ENCODE measurements at regions of chr3 and their contacts with region 1.

Region 1: GRCh38 chr3:98593046-98593936 is at the start of gene CPOX:
- DNase-seq: peak; percentile 57 to 67 (median 65)
- H3K4me3 ChIP-seq: peak within 1 kb of the TSS; percentile 54 to 83 (median 75)
- H3K4me3 Mint-ChIP-seq: peak within 1 kb of the TSS; percentile 90 to 99
- H3K27ac ChIP-seq: peak within 1 kb of the TSS; percentile 5 to 80
- H3K27ac Mint-ChIP-seq: peak within 1 kb of the TSS; percentile 76 to 96 (median 90)
- H3K4me1 ChIP-seq: peaks cover 46 to 64% of the 10 kb centered on the region in 2 donors
- H3K4me1 Mint-ChIP-seq: peaks cover 63% of the 10 kb centered on the region
- H3K27me3 ChIP-seq: no peaks in the 10 kb centered on the region
- H3K27me3 Mint-ChIP-seq: peaks cover 0 to 5% (median 2%) of the 10 kb centered on the region in 3 donors
- CTCF ChIP-seq: no peak
- polyA plus RNA-seq, gene CPOX: 4.2 to 12.8 (median 5.2) TPM

Region 2: GRCh38 chr3:98525494-98525893 is 67.8 kb before region 1 on chr3:
- intact Hi-C with region 1: loop called in 1 of 2 experiments (anchors 5 kb)
- DNase-seq: no peak
- H3K4me3 ChIP-seq: no peak overlapping the region
- H3K4me3 Mint-ChIP-seq: no peak overlapping the region
- H3K27ac ChIP-seq: no peak overlapping the region
- H3K27ac Mint-ChIP-seq: no peak overlapping the region
- H3K4me1 ChIP-seq: peaks cover 11 to 19% of the 10 kb centered on the region in 2 donors
- H3K4me1 Mint-ChIP-seq: peaks cover 19% of the 10 kb centered on the region
- H3K27me3 ChIP-seq: no peaks in the 10 kb centered on the region
- H3K27me3 Mint-ChIP-seq: peaks cover 0 to 5% (median 1%) of the 10 kb centered on the region in 3 donors
- CTCF ChIP-seq: no peak

Region 3: DNA sequence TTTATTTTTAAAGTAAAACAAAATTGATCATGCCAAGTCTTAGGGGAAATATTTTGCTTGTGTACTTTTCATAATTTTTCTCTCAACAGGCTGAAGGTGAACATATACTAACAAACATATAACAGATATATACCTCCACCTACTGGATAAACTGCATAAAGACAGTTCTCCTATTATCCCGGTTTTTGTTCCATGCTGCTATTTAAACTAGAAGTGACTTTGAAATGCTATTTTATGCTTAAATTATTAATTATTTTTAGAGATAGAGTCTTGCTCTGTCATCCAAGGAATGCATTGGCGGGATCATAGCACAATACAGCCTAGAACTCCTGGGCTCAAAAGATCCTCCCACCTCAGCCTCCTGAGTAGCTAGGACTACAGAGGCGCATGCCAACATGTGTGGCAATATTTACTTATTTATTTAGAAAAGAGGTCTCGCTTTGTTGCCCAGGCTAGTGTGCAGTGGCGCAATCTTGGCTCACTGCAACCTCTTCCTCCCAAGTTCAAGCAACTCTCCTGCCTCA is 219.6 kb after region 1 on chr3:
- intact Hi-C with region 1: loop called in 1 of 2 experiments (anchors 5 kb)
- DNase-seq: peak; percentile 9 to 65 (median 40)
- H3K4me3 ChIP-seq: no peak overlapping the region
- H3K4me3 Mint-ChIP-seq: no peak overlapping the region
- H3K27ac ChIP-seq: no peak overlapping the region
- H3K27ac Mint-ChIP-seq: no peak overlapping the region
- H3K4me1 ChIP-seq: peaks cover 18 to 21% of the 10 kb centered on the region in 2 donors
- H3K4me1 Mint-ChIP-seq: peaks cover 22% of the 10 kb centered on the region
- H3K27me3 ChIP-seq: no peaks in the 10 kb centered on the region
- H3K27me3 Mint-ChIP-seq: peaks cover 0 to 1% (median 0%) of the 10 kb centered on the region in 3 donors
- CTCF ChIP-seq: peak; percentile 91